ENCODE measurements at regions of chr11 and their contacts with region 1.

Region 1: DNA sequence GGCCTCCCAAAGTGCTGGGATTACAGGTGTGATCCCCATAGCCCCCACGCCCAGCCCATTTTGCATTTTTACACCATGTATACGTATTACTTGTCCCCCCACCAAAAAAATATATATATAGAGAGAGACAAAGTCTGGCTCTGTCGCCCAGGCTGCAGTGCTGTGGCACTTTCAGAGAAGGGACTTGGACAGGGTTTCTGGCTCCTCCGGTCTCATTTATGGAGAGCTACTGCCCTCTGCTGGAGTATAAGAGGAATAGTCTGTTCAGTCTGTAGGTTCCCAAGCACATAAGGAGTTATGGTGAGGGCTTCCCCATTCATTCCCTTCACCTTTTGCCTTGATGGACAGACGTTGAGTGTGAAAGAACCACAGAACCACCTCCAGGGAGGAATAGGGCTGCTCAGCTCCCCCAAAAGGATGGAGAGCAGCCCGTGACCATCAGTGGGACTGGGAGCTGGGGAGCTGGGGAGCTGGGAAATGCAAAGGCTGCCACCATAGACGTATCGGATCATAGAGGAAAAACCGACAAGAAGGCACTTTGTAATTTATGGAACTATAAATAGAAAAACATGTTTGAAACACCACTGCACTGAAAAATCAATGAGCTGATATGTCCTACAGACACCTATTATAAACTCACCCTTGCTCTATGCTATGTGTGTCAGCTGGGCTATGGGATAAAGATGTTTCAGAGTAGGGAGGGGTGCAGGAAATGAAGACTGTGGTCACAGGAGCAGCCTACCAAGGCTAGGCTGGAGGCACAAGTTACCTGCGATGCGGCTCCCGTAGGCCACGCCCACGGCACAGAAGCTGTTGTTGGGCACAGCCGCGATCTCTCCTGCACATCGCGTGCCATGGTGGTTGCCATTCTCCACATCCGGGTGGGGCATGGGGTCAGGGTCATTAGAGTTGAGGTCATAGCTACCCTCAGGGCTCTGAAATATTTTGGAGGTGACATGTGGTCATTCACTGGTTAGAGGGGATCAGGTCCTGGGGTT is 5.2 kb downstream of the PCSK7 start:
- DNase-seq: peak; percentile 73
- H3K4me3 ChIP-seq: no peak overlapping the region
- H3K27ac ChIP-seq: no peak overlapping the region
- H3K4me1 ChIP-seq: peaks cover 10% of the 10 kb centered on the region
- H3K27me3 ChIP-seq: no peaks in the 10 kb centered on the region
- CTCF ChIP-seq: peak; percentile 65 to 76
- POLR2A ChIP-seq: no peak

Region 2: DNA sequence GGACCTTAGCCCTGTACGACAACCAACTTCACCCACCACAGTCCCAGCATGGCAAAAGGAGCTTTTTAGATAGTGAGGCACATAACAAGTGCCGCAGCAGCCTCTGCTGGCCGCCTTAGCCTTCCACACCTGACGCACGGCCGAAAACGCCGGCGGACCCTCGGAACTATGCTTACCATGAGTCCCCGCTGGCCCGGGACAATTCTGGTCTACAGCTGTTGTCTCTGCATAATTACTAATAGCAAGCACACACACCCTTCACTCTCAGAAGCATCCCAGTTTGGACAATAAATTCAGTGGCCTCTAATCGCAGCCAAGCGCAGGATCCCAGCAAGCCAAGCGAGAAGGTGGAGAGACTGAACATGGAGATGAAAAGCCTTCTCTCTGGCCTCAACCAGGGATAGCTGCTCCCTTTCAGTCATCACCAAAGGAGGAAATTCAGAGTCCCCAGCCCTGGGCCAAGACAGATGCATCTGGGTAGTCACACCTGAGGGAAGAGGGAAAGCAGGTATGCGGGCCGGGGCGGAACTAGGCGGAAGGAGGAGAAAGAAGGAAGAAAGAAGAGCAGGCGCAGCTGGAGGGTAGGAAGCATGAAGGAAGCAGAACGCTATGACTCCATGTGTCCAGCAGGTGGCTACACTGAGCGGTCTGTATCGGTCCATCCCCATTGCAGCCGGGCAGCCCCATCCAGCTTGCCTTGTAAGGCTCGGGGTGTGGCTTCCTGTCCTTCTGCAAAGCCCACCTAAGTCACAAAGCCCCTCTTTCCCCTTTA is 494.2 kb before region 1 on chr11:
- CTCF ChIA-PET with region 1: interaction called, 16 read pairs
- POLR2A ChIA-PET with region 1: no interaction called
- dilution Hi-C with region 1: no loop called
- intact Hi-C with region 1: loop called (anchors 1 kb)
- DNase-seq: peak; percentile 40
- H3K4me3 ChIP-seq: no peak overlapping the region
- H3K27ac ChIP-seq: no peak overlapping the region
- H3K4me1 ChIP-seq: no peaks in the 10 kb centered on the region
- H3K27me3 ChIP-seq: peaks cover 8 to 15% of the 10 kb centered on the region in 2 experiments
- CTCF ChIP-seq: peak; percentile 78 to 96
- POLR2A ChIP-seq: no peak

Region 3: GRCh38 chr11:116879800-116880625 is 346.7 kb before region 1 on chr11:
- CTCF ChIA-PET with region 1: interaction called, 11 read pairs
- POLR2A ChIA-PET with region 1: no interaction called
- dilution Hi-C with region 1: no loop called
- intact Hi-C with region 1: loop called (anchors 1 kb)
- DNase-seq: peak; percentile 76
- H3K4me3 ChIP-seq: no peak overlapping the region
- H3K27ac ChIP-seq: no peak overlapping the region
- H3K4me1 ChIP-seq: no peaks in the 10 kb centered on the region
- H3K27me3 ChIP-seq: no peaks in the 10 kb centered on the region
- CTCF ChIP-seq: peak; percentile 55 to 68
- POLR2A ChIP-seq: no peak

Region 4: DNA sequence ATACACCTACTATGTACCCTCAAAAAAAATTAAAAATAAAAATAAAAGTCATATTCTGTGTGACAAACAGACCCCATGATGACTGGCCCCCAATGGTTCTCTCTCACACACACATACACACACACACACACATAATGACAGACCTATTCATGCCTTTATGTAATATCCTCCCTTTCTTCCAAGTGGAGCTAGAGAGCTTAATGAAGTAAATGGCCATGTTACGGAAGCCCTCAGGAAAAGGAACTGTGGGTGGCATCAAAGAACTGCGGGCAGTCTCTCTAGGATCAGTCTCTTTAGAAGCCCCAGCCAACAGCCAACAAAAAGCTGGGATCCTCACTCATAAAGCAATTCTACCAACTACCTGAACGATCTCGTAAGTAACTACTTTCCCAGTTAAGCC is 254.0 kb before region 1 on chr11:
- CTCF ChIA-PET with region 1: no interaction called
- POLR2A ChIA-PET with region 1: no interaction called
- dilution Hi-C with region 1: no loop called
- intact Hi-C with region 1: no loop called
- DNase-seq: no peak
- H3K4me3 ChIP-seq: no peak overlapping the region
- H3K27ac ChIP-seq: no peak overlapping the region
- H3K4me1 ChIP-seq: no peaks in the 10 kb centered on the region
- H3K27me3 ChIP-seq: no peaks in the 10 kb centered on the region
- CTCF ChIP-seq: no peak
- POLR2A ChIP-seq: no peak

Region 5: DNA sequence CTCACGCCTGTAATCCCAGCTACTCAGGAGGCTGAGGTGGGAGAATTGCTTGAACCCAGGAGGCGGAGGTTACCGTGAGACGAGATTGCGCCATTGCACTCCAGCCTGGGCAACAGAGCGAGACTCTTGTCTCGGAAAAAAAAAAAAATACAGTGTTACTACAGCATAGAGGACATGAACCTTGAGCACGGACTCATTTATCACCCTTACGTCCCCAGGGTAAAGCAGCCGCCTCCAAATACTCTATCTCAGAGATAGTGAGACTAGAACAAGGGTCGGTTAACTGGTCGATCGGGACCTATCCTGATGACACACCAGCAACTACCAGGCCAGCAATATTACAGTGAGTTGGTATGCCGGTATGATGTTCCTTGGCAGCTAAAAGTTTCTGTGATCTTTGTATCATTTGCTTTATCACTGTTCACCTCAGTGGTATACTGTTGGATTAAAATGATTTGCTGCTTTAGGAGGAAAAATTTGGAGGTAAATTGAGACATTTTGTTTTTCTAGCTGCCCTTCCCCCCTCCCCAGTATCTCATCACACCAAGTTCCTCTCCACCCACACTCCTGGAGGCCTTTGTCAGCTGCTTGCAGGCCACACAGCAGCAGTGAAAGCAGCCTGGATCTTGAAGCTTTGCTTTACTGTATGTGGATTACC is 55.2 kb before region 1 on chr11:
- CTCF ChIA-PET with region 1: interaction called, 10 read pairs
- POLR2A ChIA-PET with region 1: no interaction called
- dilution Hi-C with region 1: no loop called
- intact Hi-C with region 1: no loop called
- DNase-seq: no peak
- H3K4me3 ChIP-seq: no peak overlapping the region
- H3K27ac ChIP-seq: no peak overlapping the region
- H3K4me1 ChIP-seq: peaks cover 14% of the 10 kb centered on the region
- H3K27me3 ChIP-seq: no peaks in the 10 kb centered on the region
- CTCF ChIP-seq: no peak
- POLR2A ChIP-seq: no peak

Region 6: DNA sequence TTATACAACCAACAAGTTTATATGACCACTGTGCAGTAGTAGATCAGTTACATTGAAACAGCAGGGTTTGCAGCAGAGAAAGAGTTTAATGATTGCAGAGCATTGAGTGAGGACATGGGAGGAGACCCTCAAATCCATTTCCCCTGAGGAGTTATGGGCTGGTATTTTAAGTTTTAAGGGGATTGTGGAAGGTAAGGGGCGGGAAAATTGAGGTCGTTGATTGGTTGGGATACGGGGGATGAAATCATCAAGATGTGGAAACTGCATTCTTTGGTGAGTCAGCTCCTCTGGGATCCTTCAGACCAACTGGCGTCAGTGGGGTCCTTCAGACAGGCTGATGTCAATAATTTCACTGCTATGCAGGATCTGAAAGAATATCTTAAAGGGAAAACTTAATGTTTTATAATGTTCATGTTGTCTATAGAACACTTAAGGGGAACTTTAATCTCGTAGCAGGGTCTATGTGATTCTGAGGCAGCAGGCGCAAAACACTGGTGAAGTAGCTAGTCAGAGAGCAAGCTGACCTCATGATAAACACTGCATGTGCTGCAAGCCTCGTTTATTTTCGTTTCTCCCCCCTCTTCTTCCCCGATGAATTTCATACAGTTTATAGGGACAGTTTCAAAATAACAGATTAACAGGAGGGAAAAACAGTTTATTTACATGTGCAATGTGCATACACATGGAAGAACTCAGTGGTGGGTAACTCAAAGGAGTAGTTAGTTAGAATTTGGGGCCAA is 47.0 kb after region 1 on chr11:
- CTCF ChIA-PET with region 1: no interaction called
- POLR2A ChIA-PET with region 1: no interaction called
- dilution Hi-C with region 1: no loop called
- intact Hi-C with region 1: no loop called
- DNase-seq: no peak
- H3K4me3 ChIP-seq: no peak overlapping the region
- H3K27ac ChIP-seq: no peak overlapping the region
- H3K4me1 ChIP-seq: no peaks in the 10 kb centered on the region
- H3K27me3 ChIP-seq: no peaks in the 10 kb centered on the region
- CTCF ChIP-seq: no peak
- POLR2A ChIP-seq: no peak

Region 7: DNA sequence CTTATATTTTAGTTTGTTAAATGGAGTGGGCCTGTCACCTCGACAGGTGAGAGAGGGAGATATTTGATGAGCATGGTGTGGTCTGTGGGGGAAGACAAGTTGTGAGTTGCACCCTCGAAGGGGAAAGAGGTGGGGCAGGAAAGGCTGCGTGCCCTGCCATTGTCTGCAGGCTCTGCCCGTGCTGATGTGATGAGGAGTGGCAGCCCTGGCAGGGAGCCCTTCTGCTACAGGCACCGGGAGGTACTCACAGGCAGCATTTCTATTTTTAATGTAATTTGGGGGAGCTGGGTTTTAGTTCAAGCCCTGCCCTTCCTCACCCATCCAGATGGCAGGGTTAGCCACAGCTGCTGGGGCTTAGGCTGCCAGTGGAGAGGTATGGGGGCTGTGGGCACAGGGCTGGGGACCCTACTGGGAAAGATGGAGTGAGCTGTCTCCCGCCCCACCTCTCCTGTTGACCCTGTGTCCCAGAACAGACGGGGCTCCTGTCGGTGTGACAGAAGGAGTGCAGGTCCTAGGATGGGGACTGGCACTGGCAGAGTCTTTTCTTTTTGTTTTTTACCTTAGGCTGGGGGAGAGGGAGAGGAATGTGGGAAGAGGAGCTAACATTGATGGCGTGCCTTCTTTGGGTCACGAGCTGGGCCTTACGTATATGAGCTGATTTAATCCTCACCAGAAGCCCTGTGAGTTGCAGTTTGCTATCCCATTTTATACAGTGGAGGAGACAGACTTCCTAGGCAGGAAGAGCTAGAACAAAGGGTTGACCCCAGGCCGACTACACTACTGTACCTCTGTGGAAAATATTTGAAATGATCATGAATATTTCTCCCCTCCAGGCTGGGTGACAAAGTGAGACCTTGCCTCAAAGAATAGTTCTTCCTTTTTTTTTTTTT is 152.5 kb after region 1 on chr11:
- CTCF ChIA-PET with region 1: no interaction called
- POLR2A ChIA-PET with region 1: no interaction called
- dilution Hi-C with region 1: no loop called
- intact Hi-C with region 1: no loop called
- DNase-seq: peak; percentile 83
- H3K4me3 ChIP-seq: no peak overlapping the region
- H3K27ac ChIP-seq: peak overlapping the region; percentile 77
- H3K4me1 ChIP-seq: peaks cover 19% of the 10 kb centered on the region
- H3K27me3 ChIP-seq: no peaks in the 10 kb centered on the region
- CTCF ChIP-seq: no peak
- POLR2A ChIP-seq: no peak